Body of pancreas (tissue), 4 donors: ENCODE measurements at regions of chr7 and their contacts with region 1.

Region 1: DNA sequence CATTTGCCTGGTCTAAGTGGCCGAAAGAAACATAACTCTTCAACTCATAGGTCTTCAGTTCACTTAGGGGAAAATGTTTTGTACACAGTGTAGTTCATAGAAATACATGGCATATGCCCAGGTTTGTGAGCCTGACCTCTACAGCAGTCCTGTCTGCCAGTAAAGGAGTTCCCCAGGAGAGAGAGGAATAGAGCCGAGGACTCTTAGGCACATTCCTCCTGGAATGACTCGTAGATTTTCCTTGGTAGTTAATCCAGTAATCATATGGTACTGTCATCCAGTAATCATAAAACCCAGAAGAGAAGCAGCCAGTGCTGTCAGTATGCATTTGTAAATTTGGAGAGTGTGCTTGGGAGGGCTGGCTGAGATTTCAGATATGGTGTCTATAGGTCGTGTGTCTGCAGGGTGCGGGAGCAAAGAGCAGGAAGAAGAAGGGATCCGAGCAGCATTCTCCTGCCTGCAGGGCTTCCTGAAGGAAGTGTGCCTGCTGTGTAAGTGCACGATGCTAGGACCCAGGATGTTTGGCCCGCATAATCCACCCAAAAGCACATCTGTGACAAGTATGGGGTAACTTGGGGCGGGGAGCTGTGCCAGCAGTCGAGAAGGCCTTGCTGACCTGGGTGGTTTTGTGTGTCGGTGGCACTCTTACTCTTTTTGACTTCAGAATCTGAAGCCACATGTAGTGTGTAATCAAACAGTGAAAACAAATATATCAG is 13.9 kb downstream of the EIF4H start:
- DNase-seq: no peak
- ATAC-seq: no peak
- H3K4me3 ChIP-seq: no peak overlapping the region
- H3K27ac ChIP-seq: no peak overlapping the region
- H3K4me1 ChIP-seq: peaks cover 57% of the 10 kb centered on the region
- H3K27me3 ChIP-seq: no peaks in the 10 kb centered on the region
- CTCF ChIP-seq: no peak
- POLR2A ChIP-seq: no peak

Region 2: DNA sequence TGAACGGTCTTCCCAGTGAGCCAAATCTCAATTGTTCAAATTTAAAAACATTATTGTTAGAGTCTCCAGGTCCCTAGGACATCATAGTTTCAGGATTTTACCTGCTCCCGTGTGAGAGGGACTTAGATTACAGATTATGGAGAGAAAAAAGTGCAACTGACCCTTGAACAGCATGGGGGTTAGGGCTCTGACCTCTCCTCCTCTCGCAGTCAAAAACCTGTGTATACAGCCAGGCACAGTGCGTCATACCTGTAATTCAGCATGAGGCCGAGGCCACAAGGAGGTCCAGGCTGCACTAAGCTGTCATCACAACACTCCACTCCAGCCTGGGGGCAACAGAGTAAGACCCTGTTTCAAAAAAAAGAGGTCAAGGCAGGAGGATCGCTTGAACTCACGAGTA is 691.4 kb before region 1 on chr7:
- intact Hi-C with region 1: no loop called
- DNase-seq: no peak
- ATAC-seq: no peak
- H3K4me3 ChIP-seq: no peak overlapping the region
- H3K27ac ChIP-seq: no peak overlapping the region
- H3K4me1 ChIP-seq: no peaks in the 10 kb centered on the region
- H3K27me3 ChIP-seq: no peaks in the 10 kb centered on the region
- CTCF ChIP-seq: no peak
- POLR2A ChIP-seq: no peak

Region 3: GRCh38 chr7:74070619-74070921 is 117.5 kb before region 1 on chr7:
- intact Hi-C with region 1: loop called (anchors 5 kb)
- DNase-seq: no peak
- ATAC-seq: no peak
- H3K4me3 ChIP-seq: no peak overlapping the region
- H3K27ac ChIP-seq: no peak overlapping the region
- H3K4me1 ChIP-seq: no peaks in the 10 kb centered on the region
- H3K27me3 ChIP-seq: no peaks in the 10 kb centered on the region
- CTCF ChIP-seq: no peak
- POLR2A ChIP-seq: no peak